Endothelial cell of umbilical vein (primary cell): ENCODE measurements at regions of chr9 and their contacts with region 1.

Region 1: DNA sequence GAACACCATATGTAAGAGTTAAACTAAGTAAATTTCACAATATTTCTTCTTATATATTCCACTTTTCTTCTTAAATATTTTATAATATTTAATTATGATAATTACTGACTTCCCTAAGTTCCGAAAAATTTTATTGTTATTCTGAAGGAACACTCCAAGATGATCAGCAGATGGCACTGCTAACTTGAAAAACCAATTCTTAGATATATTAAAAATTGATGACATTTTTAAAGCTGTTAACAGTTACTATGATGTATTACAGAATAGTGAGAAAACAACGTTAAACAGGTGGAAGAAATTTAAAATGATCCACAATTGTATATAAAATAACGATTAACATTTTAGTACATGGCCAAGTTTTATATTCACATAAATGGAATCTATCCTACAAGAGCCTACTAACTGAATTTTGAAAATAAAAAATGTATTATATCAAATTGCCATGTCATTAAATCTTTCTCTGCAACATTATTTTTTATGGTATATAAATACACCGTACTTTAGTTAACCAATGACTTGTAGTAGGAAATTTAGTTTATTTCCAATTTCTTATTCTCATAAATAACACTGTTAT is 30.1 kb upstream of the MUSK start:
- DNase-seq: peak; percentile 50
- H3K4me3 ChIP-seq: no peak overlapping the region
- H3K27ac ChIP-seq: no peak overlapping the region
- H3K4me1 ChIP-seq: no peaks in the 10 kb centered on the region
- H3K27me3 ChIP-seq: no peaks in the 10 kb centered on the region
- CTCF ChIP-seq: peak; percentile 9 to 17
- POLR2A ChIP-seq: no peak

Region 2: GRCh38 chr9:111149016-111149759 is 510.7 kb after region 1 on chr9:
- CTCF ChIA-PET with region 1: interaction called, 15 read pairs
- POLR2A ChIA-PET with region 1: no interaction called
- dilution Hi-C with region 1: no loop called
- intact Hi-C with region 1: loop called (anchors 5 kb)
- DNase-seq: no peak
- H3K4me3 ChIP-seq: no peak overlapping the region
- H3K27ac ChIP-seq: no peak overlapping the region
- H3K4me1 ChIP-seq: no peaks in the 10 kb centered on the region
- H3K27me3 ChIP-seq: no peaks in the 10 kb centered on the region
- CTCF ChIP-seq: no peak
- POLR2A ChIP-seq: no peak

Region 3: DNA sequence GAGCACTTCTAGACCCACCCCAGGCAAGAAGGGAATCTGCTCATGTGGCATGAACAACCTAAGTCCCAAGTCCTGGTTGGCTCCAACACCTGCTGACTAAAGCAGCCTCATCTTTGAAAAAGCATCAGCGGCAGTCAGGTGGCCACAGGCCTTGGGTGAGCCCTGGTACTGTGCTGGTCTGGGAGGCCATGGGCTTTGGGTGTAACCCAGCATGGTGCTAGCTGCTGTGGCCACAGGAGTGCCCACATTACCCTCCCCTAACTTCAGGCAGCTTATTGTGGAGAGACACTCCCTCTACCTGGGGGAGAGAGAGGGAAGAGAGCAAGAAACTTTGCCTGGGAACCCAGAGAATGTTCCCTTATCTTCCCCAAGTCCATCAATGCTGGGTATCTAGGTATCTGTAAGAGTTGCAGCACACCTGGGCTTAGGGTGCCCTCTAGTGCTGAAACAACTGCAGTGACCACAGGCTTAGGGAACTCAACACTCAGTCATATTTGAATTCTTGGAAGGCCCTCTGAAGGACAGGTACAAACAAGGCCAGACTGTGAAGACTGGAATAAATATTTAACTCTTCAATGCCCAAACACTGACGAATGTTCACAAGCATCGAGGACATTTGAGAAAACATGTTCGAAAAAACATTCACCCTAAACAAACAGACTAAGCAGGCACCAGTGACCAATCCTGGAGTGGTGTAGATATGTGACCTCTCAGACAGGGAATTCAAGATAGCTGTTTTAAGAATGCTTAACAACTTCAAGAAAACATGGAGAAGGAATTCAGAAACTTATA is 761.5 kb after region 1 on chr9:
- CTCF ChIA-PET with region 1: no interaction called
- POLR2A ChIA-PET with region 1: no interaction called
- dilution Hi-C with region 1: no loop called
- intact Hi-C with region 1: loop called (anchors 2 kb)
- DNase-seq: peak; percentile 14
- H3K4me3 ChIP-seq: no peak overlapping the region
- H3K27ac ChIP-seq: no peak overlapping the region
- H3K4me1 ChIP-seq: no peaks in the 10 kb centered on the region
- H3K27me3 ChIP-seq: no peaks in the 10 kb centered on the region
- CTCF ChIP-seq: peak; percentile 50 to 53
- POLR2A ChIP-seq: no peak